Prostate gland (tissue), 2 donors: ENCODE measurements at regions of chr20 and their contacts with region 1.

Region 1: DNA sequence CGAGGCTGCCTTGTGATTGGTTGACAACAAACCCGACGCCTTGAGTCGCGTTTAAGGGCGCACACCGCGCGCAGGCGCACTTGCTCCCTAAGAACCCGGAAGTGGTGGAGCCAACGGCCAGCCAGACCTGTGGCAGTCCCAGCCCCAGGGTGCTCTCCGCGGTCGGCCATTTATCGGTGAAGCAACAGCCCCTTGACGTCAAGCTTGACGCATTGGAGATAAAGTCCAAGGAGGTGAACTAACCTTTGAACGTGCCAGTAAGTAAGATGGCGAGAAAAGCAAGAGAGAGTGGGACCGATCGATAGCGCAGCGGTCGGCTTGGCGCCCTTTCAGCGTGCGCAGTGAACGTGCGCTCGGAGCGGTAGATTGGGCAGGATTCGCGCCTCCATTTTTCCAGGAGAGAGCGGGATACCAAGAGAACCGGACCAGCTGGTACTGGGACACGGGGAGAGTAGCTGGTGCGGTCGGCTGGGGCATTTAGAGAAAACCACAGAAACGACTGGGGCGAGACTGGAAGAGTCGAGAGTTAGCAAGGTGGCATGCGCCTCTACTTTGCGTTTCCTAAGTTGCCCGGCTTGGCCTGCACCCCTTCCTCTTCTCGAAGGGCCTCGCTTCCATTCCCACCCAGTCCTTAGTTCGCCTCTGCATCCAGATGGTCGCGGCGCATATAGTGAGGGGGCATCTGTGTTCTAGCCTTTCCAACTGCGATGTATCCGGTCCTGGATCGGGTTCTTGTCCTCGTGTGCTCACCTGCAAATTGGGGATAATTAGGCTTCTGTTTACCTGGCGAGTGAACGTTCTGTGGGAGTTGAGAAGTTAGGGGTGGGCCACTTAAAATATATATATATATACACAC is at the start of gene CSTF1:
- DNase-seq: peak; percentile 99
- H3K4me3 ChIP-seq: peak within 1 kb of the TSS; percentile 49 to 81
- H3K27ac ChIP-seq: peak within 1 kb of the TSS; percentile 83 to 91
- H3K4me1 ChIP-seq: no peaks in the 10 kb centered on the region
- H3K27me3 ChIP-seq: no peaks in the 10 kb centered on the region
- CTCF ChIP-seq: peak in 1 of 4 experiments; percentile 8
- POLR2A ChIP-seq: peak; percentile 51
- total RNA-seq, gene CSTF1: 35.1 to 40.2 TPM

Region 2: DNA sequence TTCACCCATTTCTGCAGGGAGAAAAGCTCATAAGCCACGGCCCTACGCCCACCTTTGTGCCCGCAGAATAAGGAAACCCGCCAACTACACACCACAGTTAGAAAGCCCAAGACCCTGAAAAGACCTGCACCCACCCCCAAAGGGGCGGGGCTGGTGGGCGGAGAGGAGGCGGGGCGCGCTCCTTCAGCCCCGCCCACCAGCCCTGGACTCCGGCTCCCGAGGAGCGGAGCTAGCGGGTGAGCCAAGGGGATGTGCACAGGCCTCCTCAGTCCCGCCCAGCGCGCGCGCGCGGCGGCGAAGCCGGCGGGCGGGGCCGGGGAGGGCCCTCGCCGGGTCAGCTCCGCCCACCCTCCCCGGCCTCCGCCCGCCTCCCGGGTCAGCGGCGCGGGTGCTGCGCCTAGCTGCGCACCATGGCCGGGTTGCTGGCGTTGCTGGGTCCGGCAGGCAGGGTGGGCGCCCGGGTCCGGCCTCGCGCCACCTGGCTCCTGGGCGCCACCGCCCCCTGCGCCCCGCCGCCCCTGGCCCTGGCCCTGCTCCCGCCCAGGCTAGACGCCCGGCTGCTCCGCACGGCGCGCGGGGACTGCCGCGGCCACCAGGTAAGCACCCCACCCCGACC is 33.8 kb before region 1 on chr20 and contains the start of gene FAM210B:
- intact Hi-C with region 1: loop called (anchors 1 kb)
- DNase-seq: peak; percentile 87
- H3K4me3 ChIP-seq: peak within 1 kb of the TSS; percentile 87 to 98
- H3K27ac ChIP-seq: peak within 1 kb of the TSS; percentile 82 to 88
- H3K4me1 ChIP-seq: peaks cover 11% of the 10 kb centered on the region
- H3K27me3 ChIP-seq: no peaks in the 10 kb centered on the region
- CTCF ChIP-seq: no peak
- POLR2A ChIP-seq: peak; percentile 52
- total RNA-seq, gene FAM210B: 66.5 to 159 TPM

Region 3: GRCh38 chr20:56468316-56469082 is 76.0 kb after region 1 on chr20 and contains the start of gene RTF2:
- intact Hi-C with region 1: loop called (anchors 2 kb)
- DNase-seq: peak; percentile 83
- H3K4me3 ChIP-seq: peak within 1 kb of the TSS; percentile 79 to 82
- H3K27ac ChIP-seq: peak within 1 kb of the TSS; percentile 75 to 84
- H3K4me1 ChIP-seq: peaks cover 9% of the 10 kb centered on the region
- H3K27me3 ChIP-seq: no peaks in the 10 kb centered on the region
- CTCF ChIP-seq: peak in 1 of 4 experiments; percentile 35
- POLR2A ChIP-seq: peak; percentile 46
- total RNA-seq, gene RTF2: 71.3 to 81.7 TPM